Naive thymus-derived CD4-positive, alpha-beta T cell (primary cell): ENCODE measurements at regions of chr12 and their contacts with region 1.

Region 1: GRCh38 chr12:32106517-32107358 is at the start of gene BICD1:
- DNase-seq: peak; percentile 43 to 84 (median 65)
- ATAC-seq: peak; percentile 90
- H3K4me3 ChIP-seq: peak within 1 kb of the TSS; percentile 90
- H3K4me3 Mint-ChIP-seq: peak within 1 kb of the TSS; percentile 82 to 98 (median 96)
- H3K27ac ChIP-seq: peak within 1 kb of the TSS; percentile 67
- H3K27ac Mint-ChIP-seq: peak within 1 kb of the TSS; percentile 77 to 94 (median 91)
- H3K4me1 ChIP-seq: peaks cover 19 to 22% of the 10 kb centered on the region in 2 donors
- H3K4me1 Mint-ChIP-seq: peaks cover 11 to 42% (median 33%) of the 10 kb centered on the region in 7 donors
- H3K27me3 ChIP-seq: no peaks in the 10 kb centered on the region
- H3K27me3 Mint-ChIP-seq: peaks cover 0 to 13% (median 0%) of the 10 kb centered on the region in 5 donors
- total RNA-seq, gene BICD1: 16.7 to 25.1 (median 18.5) TPM

Region 2: DNA sequence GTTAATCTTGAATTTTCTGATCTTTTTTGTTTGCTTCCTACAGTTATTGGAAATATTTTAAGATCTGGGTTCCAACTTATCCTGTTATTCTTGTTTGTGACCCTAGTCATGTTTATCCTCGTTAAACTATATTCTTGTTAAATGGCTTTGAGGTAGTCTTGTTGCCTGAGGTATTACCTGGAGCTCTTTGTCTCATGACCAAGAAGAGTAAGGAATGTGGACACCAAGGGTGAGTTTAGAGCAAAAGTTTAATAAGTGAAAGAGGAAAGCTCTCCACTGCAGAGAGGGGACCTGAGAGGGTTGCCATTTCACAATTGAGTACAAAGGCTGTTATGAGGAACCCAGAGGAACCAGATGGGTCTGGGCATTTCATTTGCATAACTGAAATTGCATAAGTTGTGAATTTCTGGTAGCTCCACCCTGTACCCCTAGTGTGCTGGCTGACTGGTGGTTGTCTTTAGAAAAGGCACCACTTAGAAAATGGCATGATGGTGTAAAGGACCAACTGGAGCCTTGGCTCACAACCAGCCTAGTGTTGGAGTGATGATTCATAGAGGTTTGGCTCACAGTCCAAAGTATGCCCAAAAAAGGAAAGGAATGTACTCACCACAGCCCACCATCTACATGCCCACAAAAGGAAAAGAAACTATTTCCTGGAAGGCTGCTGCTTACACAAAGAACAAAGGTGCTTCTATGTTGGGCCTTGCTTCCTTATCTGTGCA is 184.2 kb before region 1 on chr12:
- CTCF ChIA-PET with region 1: no interaction called
- POLR2A ChIA-PET with region 1: no interaction called
- intact Hi-C with region 1: no loop called
- DNase-seq: peak in 1 of 9 donors; percentile 7
- ATAC-seq: no peak
- H3K4me3 ChIP-seq: no peak overlapping the region
- H3K4me3 Mint-ChIP-seq: no peak overlapping the region
- H3K27ac ChIP-seq: no peak overlapping the region
- H3K27ac Mint-ChIP-seq: peak overlapping the region in 4 of 9 donors; percentile 20 to 61 (median 44)
- H3K4me1 ChIP-seq: peaks cover under 1 to 3% of the 10 kb centered on the region in 2 donors
- H3K4me1 Mint-ChIP-seq: peaks cover 1 to 8% (median 4%) of the 10 kb centered on the region in 7 donors
- H3K27me3 ChIP-seq: no peaks in the 10 kb centered on the region
- H3K27me3 Mint-ChIP-seq: no peaks in the 10 kb centered on the region

Region 3: GRCh38 chr12:32051559-32052414 is 55.0 kb before region 1 on chr12:
- CTCF ChIA-PET with region 1: no interaction called
- POLR2A ChIA-PET with region 1: no interaction called
- intact Hi-C with region 1: no loop called
- DNase-seq: no peak
- ATAC-seq: peak; percentile 60
- H3K4me3 ChIP-seq: no peak overlapping the region
- H3K4me3 Mint-ChIP-seq: no peak overlapping the region
- H3K27ac ChIP-seq: no peak overlapping the region
- H3K27ac Mint-ChIP-seq: peak overlapping the region in 2 of 9 donors; percentile 6 to 12
- H3K4me1 ChIP-seq: no peaks in the 10 kb centered on the region
- H3K4me1 Mint-ChIP-seq: peaks cover 0 to 12% (median 0%) of the 10 kb centered on the region in 7 donors
- H3K27me3 ChIP-seq: no peaks in the 10 kb centered on the region
- H3K27me3 Mint-ChIP-seq: no peaks in the 10 kb centered on the region

Region 4: DNA sequence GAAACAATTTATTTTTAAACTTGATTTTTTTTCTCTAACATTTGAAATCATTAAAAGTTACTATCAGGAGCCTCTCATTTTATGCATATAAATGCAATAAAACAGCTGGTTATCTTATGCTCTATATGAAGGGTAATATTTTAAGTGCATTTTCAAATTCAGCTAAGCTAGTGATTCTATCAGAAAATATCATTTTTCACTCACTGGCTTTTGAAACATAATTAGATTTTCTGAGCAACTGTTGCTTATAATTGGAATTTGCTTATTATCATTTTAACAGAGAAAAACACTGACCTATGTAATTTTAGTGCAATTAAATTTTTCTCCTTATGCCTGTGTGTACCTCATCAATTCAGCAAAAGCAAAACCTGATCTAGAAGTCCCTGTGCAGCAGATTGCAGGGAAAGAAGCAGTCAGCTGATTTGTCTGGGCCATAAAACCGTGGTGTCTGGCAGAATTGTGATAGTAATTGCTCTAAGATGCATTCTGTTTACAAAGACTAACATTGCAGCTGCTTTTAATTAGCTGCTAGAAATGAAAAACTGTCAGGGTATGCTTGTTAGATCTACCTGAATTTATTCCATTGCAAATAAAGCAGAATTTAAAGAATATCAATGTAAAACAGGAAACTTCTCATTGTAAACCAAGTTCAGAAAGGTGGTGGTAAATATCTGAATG is 74.9 kb after region 1 on chr12:
- CTCF ChIA-PET with region 1: no interaction called
- POLR2A ChIA-PET with region 1: no interaction called
- intact Hi-C with region 1: no loop called
- DNase-seq: no peak
- ATAC-seq: no peak
- H3K4me3 ChIP-seq: no peak overlapping the region
- H3K4me3 Mint-ChIP-seq: no peak overlapping the region
- H3K27ac ChIP-seq: no peak overlapping the region
- H3K27ac Mint-ChIP-seq: no peak overlapping the region
- H3K4me1 ChIP-seq: no peaks in the 10 kb centered on the region
- H3K4me1 Mint-ChIP-seq: peaks cover 0 to 14% (median 0%) of the 10 kb centered on the region in 7 donors
- H3K27me3 ChIP-seq: no peaks in the 10 kb centered on the region
- H3K27me3 Mint-ChIP-seq: no peaks in the 10 kb centered on the region

Region 5: GRCh38 chr12:32273712-32274111 is 167.0 kb after region 1 on chr12:
- CTCF ChIA-PET with region 1: no interaction called
- POLR2A ChIA-PET with region 1: no interaction called
- intact Hi-C with region 1: loop called in 1 of 2 experiments (anchors 2 kb)
- DNase-seq: peak in 8 of 9 donors; percentile 16 to 69 (median 56)
- ATAC-seq: peak; percentile 94
- H3K4me3 ChIP-seq: peak overlapping the region; percentile 3
- H3K4me3 Mint-ChIP-seq: peak overlapping the region; percentile 66 to 82 (median 74)
- H3K27ac ChIP-seq: peak overlapping the region; percentile 65
- H3K27ac Mint-ChIP-seq: peak overlapping the region; percentile 74 to 99 (median 97)
- H3K4me1 ChIP-seq: peaks cover 0 to 15% of the 10 kb centered on the region in 2 donors
- H3K4me1 Mint-ChIP-seq: peaks cover 13 to 32% (median 29%) of the 10 kb centered on the region in 7 donors
- H3K27me3 ChIP-seq: no peaks in the 10 kb centered on the region
- H3K27me3 Mint-ChIP-seq: no peaks in the 10 kb centered on the region